HepG2 (cell line): ENCODE measurements at regions of chr6 and their contacts with region 1.

Region 1: DNA sequence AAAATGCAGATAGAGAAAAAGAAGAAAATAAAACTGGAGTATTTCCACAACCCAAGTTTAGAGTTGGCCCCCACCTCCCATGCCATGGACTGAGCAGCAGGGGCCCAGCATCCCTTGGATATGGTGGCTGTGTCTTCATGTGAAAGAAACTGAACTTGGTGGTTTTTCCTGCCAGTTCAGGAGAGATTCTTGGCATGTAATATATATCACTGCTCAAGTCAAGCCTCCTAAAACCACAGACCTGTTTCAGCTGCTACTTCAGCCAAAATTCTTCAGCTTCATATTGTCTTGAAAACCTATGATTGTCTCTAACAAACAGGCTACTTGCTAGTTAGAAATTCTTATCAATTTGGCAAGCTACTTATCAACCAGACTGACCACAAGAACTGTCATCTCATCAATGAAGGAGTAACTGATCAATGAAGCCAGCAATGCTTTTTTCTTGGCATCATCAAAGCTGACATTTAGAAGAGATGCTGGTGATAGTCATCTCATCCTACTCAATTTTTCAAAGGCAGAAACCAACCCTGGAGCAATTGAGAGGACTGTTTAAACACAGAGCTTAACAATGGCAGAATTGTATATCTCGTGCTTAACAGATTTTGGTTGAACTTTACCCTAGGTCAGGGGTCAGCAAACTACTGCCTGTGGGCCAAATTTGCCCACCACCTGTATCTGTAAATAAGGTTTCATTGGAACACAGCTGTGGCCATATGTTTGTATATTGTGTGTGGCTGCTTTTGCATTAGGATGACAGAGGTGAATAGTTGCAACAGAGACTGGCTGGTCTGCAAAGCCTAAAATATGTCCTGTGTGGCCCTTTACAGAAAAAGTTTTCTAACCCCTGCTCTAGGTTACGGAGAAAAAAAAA is 10.4 kb upstream of the NOL7 start:
- DNase-seq: peak; percentile 100
- ATAC-seq: peak; percentile 94
- H3K4me3 ChIP-seq: peak overlapping the region in 2 of 3 experiments; percentile 32 to 46; a peak in 2 of 6 replicates
- H3K27ac ChIP-seq: peak overlapping the region; percentile 87
- H3K4me1 ChIP-seq: peaks cover 44% of the 10 kb centered on the region
- H3K27me3 ChIP-seq: no peaks in the 10 kb centered on the region
- CTCF ChIP-seq: no peak
- EP300 ChIP-seq: peak; percentile 97 to 99
- POLR2A ChIP-seq: peak in 1 of 2 experiments; percentile 46; a peak in 1 of 4 replicates
- RAD21 ChIP-seq: peak; percentile 9; the same call in 1 of the 2 replicates

Region 2: GRCh38 chr6:13593720-13594119 is 11.1 kb before region 1 on chr6:
- CTCF ChIA-PET with region 1: no interaction called
- POLR2A ChIA-PET with region 1: interaction called, 14 read pairs
- in situ Hi-C with region 1: no loop called
- intact Hi-C with region 1: no loop called
- DNase-seq: no peak
- ATAC-seq: no peak
- H3K4me3 ChIP-seq: no peak overlapping the region
- H3K27ac ChIP-seq: no peak overlapping the region
- H3K4me1 ChIP-seq: no peaks in the 10 kb centered on the region
- H3K27me3 ChIP-seq: no peaks in the 10 kb centered on the region
- CTCF ChIP-seq: no peak
- EP300 ChIP-seq: no peak
- POLR2A ChIP-seq: no peak
- RAD21 ChIP-seq: no peak